ENCODE measurements at regions of chr10 and their contacts with region 1.

Region 1: DNA sequence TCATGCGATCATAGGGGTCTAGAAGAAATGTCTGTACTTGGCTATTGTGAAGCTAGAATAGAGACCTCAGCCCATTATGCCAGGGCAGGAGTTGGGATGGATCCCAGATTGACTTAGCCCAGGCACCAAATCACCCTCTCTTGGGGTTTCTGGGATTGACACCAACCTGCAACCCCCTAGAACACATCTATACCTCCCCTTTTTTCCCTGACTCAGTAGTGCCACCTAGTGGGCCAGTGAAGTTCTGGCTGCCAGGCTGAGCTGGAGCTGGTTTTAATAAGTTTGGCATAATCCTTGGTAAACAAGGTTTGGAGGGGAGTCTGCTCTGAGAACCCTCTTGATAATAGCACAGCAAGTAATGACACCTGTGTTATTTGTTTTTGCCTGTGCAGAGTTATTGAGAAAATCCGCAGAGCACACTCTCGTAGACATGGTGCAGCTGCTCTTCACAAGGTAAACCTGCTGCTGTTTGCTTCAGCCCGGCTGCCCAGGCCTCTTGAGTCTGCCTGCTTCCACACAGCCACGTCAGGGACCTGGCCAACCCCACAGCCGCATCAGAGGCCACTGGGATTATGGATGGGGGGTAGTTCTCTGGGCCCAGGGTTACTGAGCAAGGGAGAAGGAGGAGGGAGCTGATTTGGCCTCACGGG is 43.3 kb upstream of the NFKB2 start:
- DNase-seq: peak; percentile 73
- H3K4me3 Mint-ChIP-seq: no peak overlapping the region
- H3K27ac Mint-ChIP-seq: no peak overlapping the region
- H3K4me1 Mint-ChIP-seq: peaks cover 4% of the 10 kb centered on the region
- H3K27me3 Mint-ChIP-seq: no peaks in the 10 kb centered on the region

Region 2: DNA sequence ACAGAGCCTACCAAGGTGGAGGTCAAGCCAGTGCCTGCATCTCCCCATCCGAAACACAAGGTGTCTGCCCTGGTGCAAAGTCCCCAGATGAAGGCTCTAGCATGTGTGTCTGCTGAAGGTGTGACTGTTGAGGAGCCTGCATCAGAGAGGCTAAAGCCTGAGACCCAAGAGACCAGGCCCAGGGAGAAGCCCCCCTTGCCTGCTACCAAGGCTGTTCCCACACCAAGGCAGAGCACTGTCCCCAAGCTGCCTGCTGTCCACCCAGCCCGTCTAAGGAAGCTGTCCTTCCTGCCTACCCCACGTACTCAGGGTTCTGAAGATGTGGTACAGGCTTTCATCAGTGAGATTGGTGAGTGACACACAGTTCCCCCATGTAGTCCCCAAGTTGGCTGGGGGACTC is 210.5 kb before region 1 on chr10:
- CTCF ChIA-PET with region 1: no interaction called
- POLR2A ChIA-PET with region 1: no interaction called
- DNase-seq: no peak
- H3K4me3 Mint-ChIP-seq: no peak overlapping the region
- H3K27ac Mint-ChIP-seq: no peak overlapping the region
- H3K4me1 Mint-ChIP-seq: peaks cover 9% of the 10 kb centered on the region
- H3K27me3 Mint-ChIP-seq: no peaks in the 10 kb centered on the region

Region 3: GRCh38 chr10:102167861-102168260 is 184.3 kb before region 1 on chr10:
- CTCF ChIA-PET with region 1: interaction called, 93 read pairs
- POLR2A ChIA-PET with region 1: interaction called, 3 read pairs
- DNase-seq: no peak
- H3K4me3 Mint-ChIP-seq: no peak overlapping the region
- H3K27ac Mint-ChIP-seq: no peak overlapping the region
- H3K4me1 Mint-ChIP-seq: peaks cover 23% of the 10 kb centered on the region
- H3K27me3 Mint-ChIP-seq: peaks cover 4% of the 10 kb centered on the region

Region 4: DNA sequence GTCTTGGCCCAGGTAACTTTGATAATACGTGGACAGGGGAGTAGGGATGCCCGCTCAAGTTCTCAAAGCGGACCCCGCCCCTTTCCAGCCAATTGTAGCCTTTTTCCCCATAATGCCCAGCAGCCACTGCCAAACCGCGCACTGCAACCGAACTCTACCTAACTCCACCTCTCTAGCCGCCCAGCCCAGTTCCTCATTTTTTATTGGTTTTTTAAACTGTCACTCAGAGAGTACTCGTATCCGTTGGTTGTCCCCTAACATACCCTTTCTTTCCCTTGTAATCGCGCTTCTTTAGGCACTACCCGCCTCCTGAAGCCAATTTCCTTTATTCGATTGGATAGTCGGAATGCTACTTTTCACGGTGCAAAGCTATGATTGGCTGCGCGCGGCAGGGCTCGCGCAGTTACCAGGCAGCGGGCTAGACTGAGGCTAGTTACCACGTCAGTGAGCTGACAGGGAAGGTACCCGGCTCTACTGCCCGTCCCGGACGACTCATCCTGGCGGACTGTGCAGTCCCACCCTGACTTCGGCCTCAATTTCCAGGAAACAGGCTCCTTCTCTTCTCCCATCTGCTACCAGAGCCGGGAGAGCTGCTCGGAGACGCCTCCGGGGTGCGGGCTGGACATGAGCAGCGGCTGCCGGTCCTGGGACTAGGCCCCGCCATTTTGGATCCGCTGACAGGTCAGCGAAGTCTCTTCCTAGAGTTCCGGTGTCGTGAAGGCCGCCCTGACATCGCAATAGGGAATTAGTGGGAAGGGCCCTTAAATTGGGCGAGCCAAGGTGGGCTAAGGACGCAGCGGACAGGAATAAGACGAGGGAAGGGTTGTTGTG is 106.9 kb before region 1 on chr10 and contains the start of gene GBF1:
- CTCF ChIA-PET with region 1: interaction called, 19 read pairs
- POLR2A ChIA-PET with region 1: interaction called, 8 read pairs
- DNase-seq: peak; percentile 94
- H3K4me3 Mint-ChIP-seq: peak within 1 kb of the TSS; percentile 99
- H3K27ac Mint-ChIP-seq: peak within 1 kb of the TSS; percentile 89
- H3K4me1 Mint-ChIP-seq: peaks cover 57% of the 10 kb centered on the region
- H3K27me3 Mint-ChIP-seq: peaks cover 14% of the 10 kb centered on the region
- total RNA-seq, gene GBF1: 42.4 to 43.1 TPM

Region 5: GRCh38 chr10:102297101-102297500 is 55.1 kb before region 1 on chr10:
- CTCF ChIA-PET with region 1: interaction called, 17 read pairs
- POLR2A ChIA-PET with region 1: no interaction called
- DNase-seq: no peak
- H3K4me3 Mint-ChIP-seq: no peak overlapping the region
- H3K27ac Mint-ChIP-seq: no peak overlapping the region
- H3K4me1 Mint-ChIP-seq: peaks cover 18% of the 10 kb centered on the region
- H3K27me3 Mint-ChIP-seq: no peaks in the 10 kb centered on the region

Region 6: DNA sequence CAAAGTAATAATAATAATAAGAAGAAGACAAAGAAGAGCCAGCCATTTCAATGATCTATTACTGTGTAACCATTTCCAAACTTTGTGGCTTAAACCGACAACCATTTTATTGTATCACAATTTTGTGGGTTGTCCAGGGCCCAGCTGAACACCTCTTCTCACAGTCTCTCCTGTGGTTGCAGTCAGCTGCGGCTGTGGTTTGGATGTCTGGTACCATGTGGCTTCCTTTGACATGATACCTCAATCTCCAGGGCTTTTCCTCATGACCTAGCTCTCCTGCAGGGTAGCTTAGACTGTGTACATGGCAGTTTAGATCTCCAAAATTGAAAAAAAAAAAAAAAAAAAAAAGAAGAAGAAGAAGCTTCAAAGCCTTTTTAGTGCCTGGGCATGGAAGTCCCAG is 29.3 kb before region 1 on chr10:
- CTCF ChIA-PET with region 1: interaction called, 10 read pairs
- POLR2A ChIA-PET with region 1: no interaction called
- DNase-seq: peak; percentile 78
- H3K4me3 Mint-ChIP-seq: no peak overlapping the region
- H3K27ac Mint-ChIP-seq: no peak overlapping the region
- H3K4me1 Mint-ChIP-seq: peaks cover 23% of the 10 kb centered on the region
- H3K27me3 Mint-ChIP-seq: no peaks in the 10 kb centered on the region

Region 7: DNA sequence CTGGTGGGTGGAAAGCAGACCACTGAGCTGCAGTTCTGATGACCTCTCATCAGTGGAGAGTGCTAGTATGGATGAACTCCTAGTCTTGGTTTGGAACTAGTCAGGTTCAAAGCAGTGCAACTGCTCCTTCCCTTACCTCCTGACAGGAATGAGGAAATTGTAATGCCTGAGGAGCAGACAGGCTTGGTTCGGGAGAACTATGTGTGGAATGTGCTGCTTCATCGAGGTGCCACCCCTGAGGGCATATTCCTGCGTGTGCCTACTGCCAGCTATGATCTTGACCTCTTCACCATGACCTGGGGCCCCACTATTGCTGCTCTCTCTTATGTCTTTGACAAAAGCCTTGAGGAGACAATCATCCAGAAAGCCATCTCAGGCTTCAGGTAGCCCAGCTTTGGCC is 15.9 kb after region 1 on chr10:
- CTCF ChIA-PET with region 1: interaction called, 46 read pairs
- POLR2A ChIA-PET with region 1: interaction called, 3 read pairs
- DNase-seq: no peak
- H3K4me3 Mint-ChIP-seq: no peak overlapping the region
- H3K27ac Mint-ChIP-seq: no peak overlapping the region
- H3K4me1 Mint-ChIP-seq: no peaks in the 10 kb centered on the region
- H3K27me3 Mint-ChIP-seq: no peaks in the 10 kb centered on the region

Region 8: GRCh38 chr10:102384053-102384452 is 31.9 kb after region 1 on chr10:
- CTCF ChIA-PET with region 1: interaction called, 10 read pairs
- POLR2A ChIA-PET with region 1: no interaction called
- DNase-seq: no peak
- H3K4me3 Mint-ChIP-seq: no peak overlapping the region
- H3K27ac Mint-ChIP-seq: no peak overlapping the region
- H3K4me1 Mint-ChIP-seq: no peaks in the 10 kb centered on the region
- H3K27me3 Mint-ChIP-seq: no peaks in the 10 kb centered on the region

Region 9: DNA sequence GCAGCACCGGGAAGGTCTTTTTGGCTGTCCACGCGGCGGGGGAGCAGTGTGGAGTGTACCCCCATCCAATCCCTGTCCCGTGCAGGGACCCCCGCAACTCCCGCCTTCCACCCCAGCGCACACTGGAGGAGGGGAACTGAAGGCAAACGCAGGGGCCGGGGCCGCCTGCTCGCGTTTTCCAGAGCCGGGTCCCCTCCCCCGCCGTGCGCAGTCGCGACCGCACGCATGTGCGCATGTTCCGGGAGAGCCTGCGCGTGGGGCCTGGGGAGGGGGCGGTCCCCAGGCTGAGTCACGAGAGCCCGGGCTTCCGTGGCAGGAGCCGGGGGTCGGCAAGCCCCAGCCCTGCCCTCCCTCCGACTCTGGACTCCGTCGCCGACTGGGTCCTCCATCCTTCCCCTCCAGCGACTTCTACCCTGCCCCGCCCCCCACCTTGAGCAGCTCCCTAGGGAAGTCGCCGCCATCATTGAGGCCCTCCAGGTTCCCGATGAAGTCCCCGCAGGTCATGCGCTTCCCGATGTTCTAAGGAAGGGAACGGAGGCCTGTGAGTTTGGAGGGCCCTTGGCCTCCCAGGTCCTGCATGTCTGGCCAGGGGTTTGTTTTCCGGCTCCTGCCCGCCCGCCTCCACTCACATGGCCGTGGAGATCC is 58.4 kb after region 1 on chr10:
- CTCF ChIA-PET with region 1: no interaction called
- POLR2A ChIA-PET with region 1: no interaction called
- DNase-seq: peak; percentile 52
- H3K4me3 Mint-ChIP-seq: peak overlapping the region; percentile 58
- H3K27ac Mint-ChIP-seq: no peak overlapping the region
- H3K4me1 Mint-ChIP-seq: peaks cover 29% of the 10 kb centered on the region
- H3K27me3 Mint-ChIP-seq: peaks cover 46% of the 10 kb centered on the region

Region 10: DNA sequence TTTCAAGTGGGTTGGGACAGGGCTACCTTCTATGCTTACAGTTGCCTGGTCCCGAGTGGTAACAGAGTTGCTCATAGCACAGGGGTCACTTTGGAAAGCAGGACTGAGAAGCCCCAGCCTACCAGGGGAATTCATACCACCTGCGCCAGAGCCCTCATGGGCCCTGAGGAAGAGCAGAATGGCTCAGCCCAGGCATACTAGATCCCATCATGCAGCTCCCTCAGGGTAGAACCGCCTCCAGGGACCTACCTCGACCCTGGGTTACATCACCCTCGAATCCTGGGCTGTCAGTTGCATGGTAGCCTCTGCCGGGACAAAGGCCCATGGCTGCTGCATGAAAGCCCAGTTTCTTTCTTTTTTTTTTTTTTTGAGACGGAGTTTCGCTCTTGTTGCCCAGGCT is 77.3 kb after region 1 on chr10:
- CTCF ChIA-PET with region 1: no interaction called
- POLR2A ChIA-PET with region 1: no interaction called
- DNase-seq: no peak
- H3K4me3 Mint-ChIP-seq: no peak overlapping the region
- H3K27ac Mint-ChIP-seq: no peak overlapping the region
- H3K4me1 Mint-ChIP-seq: peaks cover 37% of the 10 kb centered on the region
- H3K27me3 Mint-ChIP-seq: no peaks in the 10 kb centered on the region

Region 11: GRCh38 chr10:102540023-102540422 is 187.8 kb after region 1 on chr10:
- CTCF ChIA-PET with region 1: no interaction called
- POLR2A ChIA-PET with region 1: no interaction called
- DNase-seq: no peak
- H3K4me3 Mint-ChIP-seq: no peak overlapping the region
- H3K27ac Mint-ChIP-seq: no peak overlapping the region
- H3K4me1 Mint-ChIP-seq: peaks cover 7% of the 10 kb centered on the region
- H3K27me3 Mint-ChIP-seq: no peaks in the 10 kb centered on the region

Measured in activated CD4-positive, alpha-beta memory T cell treated with anti-CD3 and anti-CD28 coated beads, Interleukin-2, amount 10 ng/mL, durations not matched to agents 7 days and 5 days (primary cell).